B cell (primary cell): ENCODE measurements at regions of chr19 and their contacts with region 1.

Region 1: DNA sequence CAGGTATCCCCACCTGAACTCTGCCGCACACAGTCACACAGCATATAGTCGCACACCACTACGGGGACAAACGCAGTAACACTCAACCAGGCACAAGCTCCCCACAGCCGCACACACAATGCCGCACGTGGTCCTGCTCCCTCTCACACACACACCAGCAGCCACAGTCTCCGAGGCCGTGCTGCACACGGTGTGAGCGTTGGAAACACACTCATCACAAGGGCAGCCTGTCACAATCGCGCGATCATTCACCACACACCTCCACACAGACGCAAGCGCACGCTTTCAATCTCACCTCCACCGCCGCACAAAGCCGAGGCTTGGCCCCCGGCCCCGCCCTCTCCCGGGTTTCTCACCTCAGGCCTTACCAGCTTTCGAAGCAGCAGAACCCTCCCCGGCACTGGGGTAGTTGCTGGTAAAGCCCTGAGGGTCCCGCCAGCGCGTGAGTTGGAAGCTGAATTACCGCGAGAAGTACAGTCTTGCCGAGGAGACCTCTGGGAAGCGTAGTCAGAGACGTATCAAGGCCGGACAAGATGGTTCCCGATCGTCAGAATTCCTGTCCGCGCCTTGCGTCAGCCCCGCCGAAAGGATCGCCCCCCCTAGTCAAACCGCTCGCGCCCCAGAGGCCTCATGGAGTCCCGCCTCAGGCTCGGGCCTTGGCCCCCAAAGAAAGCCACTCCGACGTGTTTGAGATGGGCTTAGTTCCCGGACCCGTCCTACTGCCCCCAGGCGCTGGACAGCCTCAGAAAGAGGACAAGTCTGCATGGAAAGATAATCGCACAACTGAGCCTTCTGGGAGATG is at the start of gene ZNF566:
- DNase-seq: peak; percentile 96
- ATAC-seq: peak; percentile 90
- H3K4me3 ChIP-seq: peak within 1 kb of the TSS; percentile 79 to 98 (median 90)
- H3K4me3 Mint-ChIP-seq: peak within 1 kb of the TSS; percentile 99
- H3K27ac ChIP-seq: peak within 1 kb of the TSS; percentile 85 to 86
- H3K27ac Mint-ChIP-seq: peak within 1 kb of the TSS; percentile 99
- H3K4me1 ChIP-seq: peaks cover 16 to 30% of the 10 kb centered on the region in 2 donors
- H3K4me1 Mint-ChIP-seq: peaks cover 41% of the 10 kb centered on the region
- H3K27me3 ChIP-seq: no peaks in the 10 kb centered on the region
- H3K27me3 Mint-ChIP-seq: no peaks in the 10 kb centered on the region
- CTCF ChIP-seq: no peak
- total RNA-seq, gene ZNF566: 26.0 and 26.6 TPM in 2 replicates

Region 2: DNA sequence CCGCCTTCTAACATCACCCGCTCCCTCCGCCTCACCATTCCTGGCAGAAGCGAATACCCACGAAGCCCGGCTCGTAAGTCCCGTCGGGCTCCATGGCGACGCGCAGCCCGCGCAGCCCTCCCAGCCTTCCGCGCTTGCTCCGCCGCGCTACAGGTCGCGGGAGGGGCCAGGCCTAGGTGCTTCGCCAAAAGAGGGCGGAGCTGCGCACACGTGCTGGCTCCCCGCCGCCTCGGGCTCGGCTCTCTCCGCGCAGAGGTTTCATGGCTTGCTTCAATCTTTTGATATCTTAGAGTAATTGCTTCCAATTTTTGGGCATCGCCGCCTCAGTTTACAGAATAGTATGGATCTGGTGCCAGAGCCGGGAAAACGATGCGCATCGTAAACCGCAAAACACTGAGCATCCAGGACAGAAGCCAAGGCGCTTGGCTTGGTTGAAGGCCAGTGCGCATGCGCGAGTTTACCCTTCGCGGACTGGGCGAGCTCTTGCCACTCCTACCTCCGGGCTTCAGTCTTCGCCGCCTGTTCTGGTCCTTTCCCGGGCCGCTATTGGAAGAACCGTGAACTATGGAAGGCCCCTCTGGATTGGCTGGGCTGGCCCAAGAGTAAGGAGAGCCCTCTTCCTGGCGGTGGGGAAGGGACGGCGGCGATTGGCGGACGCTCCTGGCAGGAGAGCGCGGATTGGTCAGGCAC is 374.4 kb before region 1 on chr19 and contains the start of gene POLR2I:
- CTCF ChIA-PET with region 1: no interaction called
- POLR2A ChIA-PET with region 1: no interaction called
- intact Hi-C with region 1: no loop called
- DNase-seq: peak; percentile 100
- ATAC-seq: peak; percentile 87
- H3K4me3 ChIP-seq: peak within 1 kb of the TSS; percentile 76 to 91 (median 79)
- H3K4me3 Mint-ChIP-seq: peak within 1 kb of the TSS; percentile 95
- H3K27ac ChIP-seq: peak within 1 kb of the TSS; percentile 84 to 90
- H3K27ac Mint-ChIP-seq: peak within 1 kb of the TSS; percentile 99
- H3K4me1 ChIP-seq: peaks cover 16 to 23% of the 10 kb centered on the region in 2 donors
- H3K4me1 Mint-ChIP-seq: peaks cover 40% of the 10 kb centered on the region
- H3K27me3 ChIP-seq: no peaks in the 10 kb centered on the region
- H3K27me3 Mint-ChIP-seq: no peaks in the 10 kb centered on the region
- CTCF ChIP-seq: no peak
- total RNA-seq, gene POLR2I: 28.2 and 33.4 TPM in 2 replicates

Region 3: GRCh38 chr19:36132489-36132891 is 356.8 kb before region 1 on chr19:
- CTCF ChIA-PET with region 1: no interaction called
- POLR2A ChIA-PET with region 1: no interaction called
- intact Hi-C with region 1: loop called (anchors 2 kb)
- DNase-seq: no peak
- ATAC-seq: no peak
- H3K4me3 ChIP-seq: no peak overlapping the region
- H3K4me3 Mint-ChIP-seq: no peak overlapping the region
- H3K27ac ChIP-seq: no peak overlapping the region
- H3K27ac Mint-ChIP-seq: no peak overlapping the region
- H3K4me1 ChIP-seq: peaks cover 7 to 28% of the 10 kb centered on the region in 2 donors
- H3K4me1 Mint-ChIP-seq: peaks cover 15% of the 10 kb centered on the region
- H3K27me3 ChIP-seq: no peaks in the 10 kb centered on the region
- H3K27me3 Mint-ChIP-seq: no peaks in the 10 kb centered on the region
- CTCF ChIP-seq: no peak

Region 4: GRCh38 chr19:36331353-36332228 is 157.7 kb before region 1 on chr19:
- CTCF ChIA-PET with region 1: no interaction called
- POLR2A ChIA-PET with region 1: no interaction called
- intact Hi-C with region 1: loop called (anchors 1 kb)
- DNase-seq: peak; percentile 94
- ATAC-seq: peak; percentile 97
- H3K4me3 ChIP-seq: peak overlapping the region; percentile 55 to 76 (median 75)
- H3K4me3 Mint-ChIP-seq: peak overlapping the region; percentile 89
- H3K27ac ChIP-seq: peak overlapping the region; percentile 14 to 60
- H3K27ac Mint-ChIP-seq: peak overlapping the region; percentile 87
- H3K4me1 ChIP-seq: peaks cover 15 to 17% of the 10 kb centered on the region in 2 donors
- H3K4me1 Mint-ChIP-seq: peaks cover 24% of the 10 kb centered on the region
- H3K27me3 ChIP-seq: no peaks in the 10 kb centered on the region
- H3K27me3 Mint-ChIP-seq: no peaks in the 10 kb centered on the region
- CTCF ChIP-seq: no peak

Region 5: GRCh38 chr19:36398571-36398970 is 90.7 kb before region 1 on chr19:
- CTCF ChIA-PET with region 1: no interaction called
- POLR2A ChIA-PET with region 1: no interaction called
- intact Hi-C with region 1: no loop called
- DNase-seq: no peak
- ATAC-seq: no peak
- H3K4me3 ChIP-seq: no peak overlapping the region
- H3K4me3 Mint-ChIP-seq: no peak overlapping the region
- H3K27ac ChIP-seq: no peak overlapping the region
- H3K27ac Mint-ChIP-seq: no peak overlapping the region
- H3K4me1 ChIP-seq: peaks cover 19 to 20% of the 10 kb centered on the region in 2 donors
- H3K4me1 Mint-ChIP-seq: peaks cover 18% of the 10 kb centered on the region
- H3K27me3 ChIP-seq: no peaks in the 10 kb centered on the region
- H3K27me3 Mint-ChIP-seq: no peaks in the 10 kb centered on the region
- CTCF ChIP-seq: no peak

Region 6: GRCh38 chr19:36418287-36419001 is 70.9 kb before region 1 on chr19 and contains the start of gene ZFP82:
- CTCF ChIA-PET with region 1: interaction called, 3 read pairs
- POLR2A ChIA-PET with region 1: interaction called, 10 read pairs
- intact Hi-C with region 1: loop called (anchors 1 kb)
- DNase-seq: peak; percentile 91
- ATAC-seq: peak; percentile 96
- H3K4me3 ChIP-seq: peak within 1 kb of the TSS; percentile 27 to 98 (median 85)
- H3K4me3 Mint-ChIP-seq: peak within 1 kb of the TSS; percentile 97
- H3K27ac ChIP-seq: peak within 1 kb of the TSS; percentile 90 to 95
- H3K27ac Mint-ChIP-seq: peak within 1 kb of the TSS; percentile 96
- H3K4me1 ChIP-seq: peaks cover 17 to 23% of the 10 kb centered on the region in 2 donors
- H3K4me1 Mint-ChIP-seq: peaks cover 33% of the 10 kb centered on the region
- H3K27me3 ChIP-seq: peaks cover 0 to 21% (median 13%) of the 10 kb centered on the region in 4 experiments
- H3K27me3 Mint-ChIP-seq: peaks cover 17% of the 10 kb centered on the region
- CTCF ChIP-seq: no peak
- total RNA-seq, gene ZFP82: 14.4 and 14.6 TPM in 2 replicates

Region 7: GRCh38 chr19:36441339-36441738 is 48.0 kb before region 1 on chr19:
- CTCF ChIA-PET with region 1: no interaction called
- POLR2A ChIA-PET with region 1: no interaction called
- intact Hi-C with region 1: no loop called
- DNase-seq: no peak
- ATAC-seq: no peak
- H3K4me3 ChIP-seq: no peak overlapping the region
- H3K4me3 Mint-ChIP-seq: no peak overlapping the region
- H3K27ac ChIP-seq: no peak overlapping the region
- H3K27ac Mint-ChIP-seq: no peak overlapping the region
- H3K4me1 ChIP-seq: no peaks in the 10 kb centered on the region
- H3K4me1 Mint-ChIP-seq: no peaks in the 10 kb centered on the region
- H3K27me3 ChIP-seq: no peaks in the 10 kb centered on the region
- H3K27me3 Mint-ChIP-seq: no peaks in the 10 kb centered on the region
- CTCF ChIP-seq: no peak

Region 8: GRCh38 chr19:36508325-36508724 is 19.0 kb after region 1 on chr19:
- CTCF ChIA-PET with region 1: no interaction called
- POLR2A ChIA-PET with region 1: no interaction called
- intact Hi-C with region 1: no loop called
- DNase-seq: no peak
- ATAC-seq: no peak
- H3K4me3 ChIP-seq: no peak overlapping the region
- H3K4me3 Mint-ChIP-seq: no peak overlapping the region
- H3K27ac ChIP-seq: no peak overlapping the region
- H3K27ac Mint-ChIP-seq: no peak overlapping the region
- H3K4me1 ChIP-seq: no peaks in the 10 kb centered on the region
- H3K4me1 Mint-ChIP-seq: no peaks in the 10 kb centered on the region
- H3K27me3 ChIP-seq: no peaks in the 10 kb centered on the region
- H3K27me3 Mint-ChIP-seq: no peaks in the 10 kb centered on the region
- CTCF ChIP-seq: no peak